IMR-90 (cell line): ENCODE measurements at regions of chr1 and their contacts with region 1.

Region 1: GRCh38 chr1:116418091-116418830 is 45.2 kb downstream of the ATP1A1 start:
- DNase-seq: peak; percentile 75
- ATAC-seq: peak; percentile 99
- H3K4me3 ChIP-seq: peak overlapping the region; percentile 86
- H3K27ac ChIP-seq: peak overlapping the region; percentile 62
- H3K4me1 ChIP-seq: peaks cover 7% of the 10 kb centered on the region
- H3K27me3 ChIP-seq: peaks cover 2% of the 10 kb centered on the region; the same call in 1 of the 2 replicates
- CTCF ChIP-seq: no peak
- POLR2A ChIP-seq: peak; percentile 62; the same call in 1 of the 2 replicates
- RAD21 ChIP-seq: no peak

Region 2: GRCh38 chr1:116139592-116140134 is 278.6 kb before region 1 on chr1:
- CTCF ChIA-PET with region 1: interaction called, 14 read pairs
- POLR2A ChIA-PET with region 1: no interaction called
- dilution Hi-C with region 1: no loop called
- in situ Hi-C with region 1: no loop called
- intact Hi-C with region 1: no loop called
- DNase-seq: no peak
- ATAC-seq: no peak
- H3K4me3 ChIP-seq: no peak overlapping the region
- H3K27ac ChIP-seq: no peak overlapping the region
- H3K4me1 ChIP-seq: no peaks in the 10 kb centered on the region
- H3K27me3 ChIP-seq: no peaks in the 10 kb centered on the region; the same call in 1 of the 2 replicates
- CTCF ChIP-seq: no peak
- POLR2A ChIP-seq: no peak
- RAD21 ChIP-seq: no peak

Region 3: GRCh38 chr1:116372587-116373444 is 45.4 kb before region 1 on chr1 and contains the start of gene ATP1A1:
- CTCF ChIA-PET with region 1: no interaction called
- POLR2A ChIA-PET with region 1: no interaction called
- dilution Hi-C with region 1: no loop called
- in situ Hi-C with region 1: no loop called
- intact Hi-C with region 1: loop called (anchors 1 kb)
- DNase-seq: peak; percentile 83
- ATAC-seq: peak; percentile 82
- H3K4me3 ChIP-seq: peak within 1 kb of the TSS; percentile 92
- H3K27ac ChIP-seq: peak within 1 kb of the TSS; percentile 80
- H3K4me1 ChIP-seq: peaks cover 18% of the 10 kb centered on the region
- H3K27me3 ChIP-seq: peaks cover 9% of the 10 kb centered on the region
- CTCF ChIP-seq: 0 out of 2 replicates have a peak, but pooled peaks have one; percentile 8
- POLR2A ChIP-seq: peak; percentile 89
- RAD21 ChIP-seq: no peak
- total RNA-seq, gene ATP1A1: 107 and 116 TPM in 2 replicates

Region 4: DNA sequence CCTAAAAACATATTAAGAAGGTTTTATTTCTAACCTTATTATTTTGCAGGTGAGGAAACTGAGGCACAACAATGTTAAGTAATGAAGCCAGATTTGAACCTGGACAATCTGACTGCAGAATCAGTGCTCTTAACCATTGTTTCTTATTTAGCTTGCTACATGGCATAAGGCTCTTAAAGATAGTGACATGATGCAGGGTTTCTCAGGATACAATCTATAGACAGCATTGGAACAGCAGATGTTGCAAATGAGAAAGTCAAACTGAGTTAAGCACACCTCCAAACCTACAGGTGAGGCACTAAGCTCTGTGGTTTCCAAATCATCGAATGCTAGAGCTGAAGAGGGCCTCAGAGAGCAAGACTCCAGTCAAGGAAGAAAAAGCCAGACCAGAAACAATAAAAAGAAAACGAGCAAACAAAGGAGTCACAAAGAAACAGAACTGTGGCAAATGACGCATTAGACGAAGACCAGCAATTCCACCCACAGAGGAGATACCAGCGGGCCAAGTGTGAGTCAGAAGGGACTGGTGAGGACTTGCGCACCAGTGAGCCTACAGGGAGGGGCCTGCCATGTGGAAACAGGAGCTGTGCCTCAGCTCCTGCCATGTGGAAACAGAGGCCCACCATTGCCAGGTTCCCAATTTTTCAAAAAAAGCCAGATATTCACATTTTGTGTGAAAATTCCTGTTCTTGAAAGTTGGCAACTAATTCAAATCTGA is 138.2 kb after region 1 on chr1:
- CTCF ChIA-PET with region 1: no interaction called
- POLR2A ChIA-PET with region 1: no interaction called
- dilution Hi-C with region 1: no loop called
- in situ Hi-C with region 1: no loop called
- intact Hi-C with region 1: no loop called
- DNase-seq: peak; percentile 48
- ATAC-seq: peak; percentile 68
- H3K4me3 ChIP-seq: no peak overlapping the region
- H3K27ac ChIP-seq: no peak overlapping the region
- H3K4me1 ChIP-seq: no peaks in the 10 kb centered on the region
- H3K27me3 ChIP-seq: no peaks in the 10 kb centered on the region
- CTCF ChIP-seq: no peak
- POLR2A ChIP-seq: no peak
- RAD21 ChIP-seq: no peak